ENCODE measurements at regions of chr9 and their contacts with region 1.

Region 1: DNA sequence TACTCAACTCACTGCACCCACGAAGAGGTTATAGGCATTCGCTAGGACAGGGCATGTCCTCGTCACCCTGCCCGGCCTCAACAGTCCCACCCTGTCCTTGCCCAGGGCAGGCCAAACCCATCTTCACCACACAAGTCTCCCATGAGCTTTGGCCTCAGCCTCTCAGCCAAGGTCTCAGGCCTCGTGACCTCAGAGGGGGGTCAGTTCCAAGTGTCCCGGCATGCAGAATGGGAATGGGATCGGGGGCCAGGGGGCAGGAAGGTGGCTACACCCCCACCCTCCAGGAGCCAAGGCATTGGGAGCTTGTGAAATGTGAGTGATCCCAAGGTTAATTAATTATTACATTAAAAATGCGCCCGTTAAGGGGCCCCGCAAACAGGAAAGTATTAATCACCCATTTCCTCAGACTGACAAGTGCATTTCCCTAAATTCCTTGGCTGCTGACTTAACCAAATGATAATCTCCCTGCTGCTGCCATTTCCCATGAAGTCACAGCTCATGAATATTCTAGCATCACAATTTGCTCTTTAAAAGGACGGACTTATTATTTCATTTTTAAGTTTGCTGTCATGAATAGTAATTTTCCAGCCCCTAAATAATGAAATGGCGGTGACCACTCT is 8.0 kb upstream of the UBAC1 start:
- DNase-seq: no peak
- H3K4me3 Mint-ChIP-seq: no peak overlapping the region
- H3K27ac Mint-ChIP-seq: no peak overlapping the region
- H3K4me1 Mint-ChIP-seq: peaks cover 6% of the 10 kb centered on the region
- H3K27me3 Mint-ChIP-seq: peaks cover 3% of the 10 kb centered on the region

Region 2: DNA sequence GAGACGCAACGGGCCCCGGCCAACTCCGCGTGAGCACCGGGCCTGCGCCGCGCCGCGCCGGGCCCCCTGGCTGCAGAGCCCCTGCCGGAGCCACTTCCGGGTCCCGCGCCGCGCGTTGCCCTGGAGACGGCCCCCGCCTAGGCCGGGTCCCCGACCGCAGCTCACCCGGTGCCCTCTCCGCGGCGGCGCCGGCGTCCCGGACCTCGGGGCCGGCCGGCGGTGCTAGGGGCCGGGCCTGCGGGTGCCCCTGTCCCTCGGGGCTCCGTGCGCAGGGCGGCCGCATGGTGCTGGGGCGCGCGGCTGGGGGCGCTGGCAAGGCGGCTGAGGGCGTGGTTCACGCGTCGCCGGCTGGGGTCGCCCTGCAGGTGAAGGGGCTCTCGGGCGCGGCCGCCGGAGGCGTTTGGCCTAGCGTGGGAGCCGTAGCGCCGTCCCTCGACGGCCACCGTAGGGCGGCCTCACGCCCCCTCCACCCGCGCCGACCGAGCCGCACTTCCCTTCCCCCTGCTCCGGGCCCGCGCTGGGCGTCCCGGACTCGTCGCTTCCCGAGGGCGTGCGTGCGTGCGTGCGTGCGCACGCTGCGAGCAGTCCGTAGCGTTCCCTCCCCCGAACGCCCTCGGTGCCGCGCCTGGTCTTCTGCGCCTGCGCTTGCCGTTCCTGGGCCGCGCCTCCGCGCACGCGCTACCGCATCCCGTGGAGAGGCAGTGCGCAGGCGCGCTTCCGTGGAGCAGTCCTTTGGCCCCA is 149.3 kb after region 1 on chr9 and contains the start of gene TMEM250:
- CTCF ChIA-PET with region 1: interaction called, 33 read pairs
- POLR2A ChIA-PET with region 1: interaction called, 5 read pairs
- DNase-seq: peak; percentile 97
- H3K4me3 Mint-ChIP-seq: peak within 1 kb of the TSS; percentile 81
- H3K27ac Mint-ChIP-seq: peak within 1 kb of the TSS; percentile 74
- H3K4me1 Mint-ChIP-seq: peaks cover 32% of the 10 kb centered on the region
- H3K27me3 Mint-ChIP-seq: no peaks in the 10 kb centered on the region
- total RNA-seq, gene TMEM250: 47.0 to 49.0 TPM